Activated naive CD8-positive, alpha-beta T cell treated with anti-CD3 and anti-CD28 coated beads, Interleukin-2, amount 10 ng/mL, durations not matched to agents 7 days and 5 days (primary cell): ENCODE measurements at regions of chr1 and their contacts with region 1.

Region 1: GRCh38 chr1:234610348-234611152 is 572 bp upstream of the IRF2BP2 start:
- DNase-seq: peak; percentile 92
- ATAC-seq: peak; percentile 54
- H3K4me3 Mint-ChIP-seq: peak overlapping the region; percentile 93
- H3K27ac Mint-ChIP-seq: peak overlapping the region; percentile 96
- H3K4me1 Mint-ChIP-seq: peaks cover 42% of the 10 kb centered on the region
- H3K27me3 Mint-ChIP-seq: no peaks in the 10 kb centered on the region

Region 2: DNA sequence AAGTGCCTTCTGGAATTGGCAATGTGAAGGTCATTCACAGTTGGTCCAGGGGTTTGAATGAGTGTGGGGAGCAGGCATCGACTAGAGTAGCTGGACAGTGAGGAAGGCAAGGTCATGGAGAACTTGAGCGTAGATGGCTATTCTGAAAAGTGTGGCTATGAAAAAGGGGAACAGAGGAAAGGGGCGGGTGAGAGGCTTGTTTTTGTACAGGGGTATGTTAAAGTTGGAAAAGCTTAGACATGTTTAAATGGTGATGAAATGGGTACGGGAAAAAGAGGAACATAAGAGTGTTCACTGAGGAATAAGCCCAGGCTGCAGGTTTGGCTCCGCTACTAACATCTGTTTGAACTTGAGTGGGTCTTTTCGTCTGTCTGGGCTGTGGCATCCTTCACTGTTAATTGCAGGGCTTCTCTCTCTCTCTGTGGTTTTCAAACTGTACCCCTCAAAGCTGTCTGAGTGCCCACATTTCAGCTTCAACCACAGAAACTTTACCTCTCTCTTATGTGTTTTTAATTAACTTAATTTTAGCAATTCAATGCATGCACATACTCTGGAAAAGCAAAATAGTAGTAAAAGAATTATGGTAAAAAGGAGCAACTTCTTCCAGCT is 308.1 kb before region 1 on chr1:
- POLR2A ChIA-PET with region 1: no interaction called
- DNase-seq: no peak
- ATAC-seq: no peak
- H3K4me3 Mint-ChIP-seq: no peak overlapping the region
- H3K27ac Mint-ChIP-seq: no peak overlapping the region
- H3K4me1 Mint-ChIP-seq: peaks cover 6% of the 10 kb centered on the region
- H3K27me3 Mint-ChIP-seq: peaks cover 3% of the 10 kb centered on the region

Region 3: DNA sequence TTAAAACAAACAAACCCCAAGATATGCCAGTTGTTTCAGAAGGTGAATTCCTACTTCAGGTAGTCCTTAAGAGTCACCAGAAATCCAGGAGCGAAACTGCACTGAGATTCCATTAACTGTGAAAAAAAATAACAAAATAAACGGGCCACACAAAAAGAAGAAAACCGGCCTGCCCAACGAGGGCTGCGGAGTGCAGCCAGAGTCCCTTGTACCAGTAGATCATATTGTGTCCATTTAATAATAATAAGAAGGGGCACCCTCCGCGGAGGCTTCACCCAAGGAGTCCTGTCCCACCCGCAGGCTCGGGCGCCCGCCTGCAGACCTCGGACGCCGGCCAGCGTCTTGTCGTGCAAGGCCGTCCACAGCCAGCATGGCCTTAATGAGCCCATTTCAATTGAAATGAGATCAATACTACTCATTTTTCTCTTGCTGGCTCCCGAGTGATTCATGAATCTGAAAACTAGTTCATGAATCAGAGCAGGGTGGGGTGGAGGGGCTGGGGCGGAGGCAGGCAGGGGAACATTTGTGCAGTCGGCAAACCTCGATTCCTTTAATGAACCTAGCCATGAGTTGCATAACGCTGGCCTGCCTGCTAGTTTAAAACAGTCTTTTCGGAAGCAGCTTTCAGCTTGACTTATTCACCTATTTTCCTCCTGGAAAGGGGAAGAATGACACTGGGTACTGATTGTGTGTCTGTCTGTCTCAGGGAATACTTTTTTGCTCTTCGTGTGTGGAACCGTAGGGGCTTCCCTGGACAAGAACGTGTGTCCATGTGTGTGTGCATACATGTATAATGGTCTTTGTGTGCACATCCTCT is 112.6 kb after region 1 on chr1:
- POLR2A ChIA-PET with region 1: interaction called, 188 read pairs
- DNase-seq: no peak
- ATAC-seq: no peak
- H3K4me3 Mint-ChIP-seq: peak overlapping the region; percentile 76
- H3K27ac Mint-ChIP-seq: peak overlapping the region; percentile 94
- H3K4me1 Mint-ChIP-seq: peaks cover 54% of the 10 kb centered on the region
- H3K27me3 Mint-ChIP-seq: no peaks in the 10 kb centered on the region

Region 4: GRCh38 chr1:234743791-234744611 is 133.5 kb after region 1 on chr1:
- POLR2A ChIA-PET with region 1: no interaction called
- DNase-seq: no peak
- ATAC-seq: no peak
- H3K4me3 Mint-ChIP-seq: no peak overlapping the region
- H3K27ac Mint-ChIP-seq: no peak overlapping the region
- H3K4me1 Mint-ChIP-seq: no peaks in the 10 kb centered on the region
- H3K27me3 Mint-ChIP-seq: peaks cover 4% of the 10 kb centered on the region

Region 5: DNA sequence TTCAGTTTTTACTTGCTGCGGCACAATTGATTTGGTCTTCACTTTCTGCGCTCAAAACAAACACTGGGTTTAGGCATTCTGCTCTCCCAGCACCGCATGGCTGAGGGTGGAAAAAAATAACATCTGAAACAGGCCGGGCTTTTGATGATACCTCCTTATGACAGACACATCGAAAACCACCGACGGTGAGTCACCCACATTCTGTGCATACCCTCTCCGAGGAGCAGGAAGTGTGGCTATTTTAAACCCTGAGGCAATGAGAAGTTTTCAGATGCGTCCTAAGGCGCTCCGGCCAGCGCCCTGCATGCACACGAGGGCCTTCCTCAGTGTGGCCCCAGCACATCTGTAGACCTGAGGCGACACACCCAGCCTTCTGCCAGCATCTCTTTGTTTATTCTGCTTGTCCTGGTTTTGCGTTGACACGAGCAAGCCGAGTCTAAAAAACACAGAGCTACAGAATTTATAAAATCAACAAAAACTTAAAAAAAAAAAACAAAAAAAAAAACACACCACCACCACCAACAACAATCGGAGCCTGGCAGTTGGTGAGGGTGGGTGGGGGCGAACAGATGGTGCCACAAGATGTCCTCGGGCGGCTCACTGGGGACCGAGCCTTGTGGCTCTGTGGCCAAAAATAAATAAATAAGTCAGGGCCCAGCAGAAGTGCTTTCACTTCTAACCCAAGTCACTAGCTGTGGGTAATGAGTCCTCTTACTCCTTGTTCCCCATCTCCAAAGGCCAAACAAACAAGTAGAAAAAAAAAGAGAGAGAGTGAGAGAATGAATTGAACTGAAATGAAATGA is 162.0 kb after region 1 on chr1:
- POLR2A ChIA-PET with region 1: interaction called, 20 read pairs
- DNase-seq: peak; percentile 71
- ATAC-seq: peak; percentile 89
- H3K4me3 Mint-ChIP-seq: peak overlapping the region; percentile 72
- H3K27ac Mint-ChIP-seq: peak overlapping the region; percentile 92
- H3K4me1 Mint-ChIP-seq: peaks cover 49% of the 10 kb centered on the region
- H3K27me3 Mint-ChIP-seq: no peaks in the 10 kb centered on the region

Region 6: DNA sequence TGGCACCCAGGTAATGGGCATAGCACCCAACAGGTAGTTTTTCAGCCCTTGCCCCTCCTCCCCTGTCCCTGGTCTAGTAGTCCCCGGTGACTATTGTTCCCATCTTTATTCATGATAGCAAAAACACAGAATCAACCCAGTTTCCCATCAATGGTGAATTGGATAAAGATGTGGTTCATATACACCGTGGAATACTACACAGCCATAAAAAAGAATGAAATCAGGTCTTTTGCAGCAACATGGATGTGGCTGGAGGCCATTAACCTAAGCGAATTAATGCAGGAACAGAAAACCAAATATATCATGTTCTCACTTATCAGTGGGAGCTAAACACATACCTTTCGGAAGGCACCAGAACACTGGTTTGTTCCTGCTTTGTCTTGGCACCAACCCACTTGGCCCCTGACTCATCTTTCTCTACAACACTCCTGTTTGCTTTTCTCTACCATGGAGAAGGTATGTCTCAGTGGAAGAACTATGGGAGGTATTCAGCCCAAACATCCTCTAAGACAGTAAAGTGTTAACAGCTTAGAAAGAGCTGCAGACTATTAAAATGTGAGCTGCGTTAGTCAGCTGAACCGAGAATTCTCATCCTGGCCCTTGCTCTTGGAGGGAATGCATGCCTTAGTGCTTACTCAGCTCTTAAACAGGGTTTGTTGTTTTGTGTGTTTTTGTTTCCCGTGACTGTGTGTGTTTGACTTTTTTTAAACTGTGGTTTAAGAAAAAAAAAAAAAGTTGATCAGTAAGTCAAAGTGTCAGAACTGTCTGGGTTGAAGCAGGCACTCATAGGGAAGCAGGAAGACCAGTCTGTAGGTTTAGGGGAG is 315.1 kb after region 1 on chr1:
- POLR2A ChIA-PET with region 1: interaction called, 39 read pairs
- DNase-seq: no peak
- ATAC-seq: no peak
- H3K4me3 Mint-ChIP-seq: peak overlapping the region; percentile 68
- H3K27ac Mint-ChIP-seq: peak overlapping the region; percentile 95
- H3K4me1 Mint-ChIP-seq: peaks cover 47% of the 10 kb centered on the region
- H3K27me3 Mint-ChIP-seq: no peaks in the 10 kb centered on the region

Region 7: DNA sequence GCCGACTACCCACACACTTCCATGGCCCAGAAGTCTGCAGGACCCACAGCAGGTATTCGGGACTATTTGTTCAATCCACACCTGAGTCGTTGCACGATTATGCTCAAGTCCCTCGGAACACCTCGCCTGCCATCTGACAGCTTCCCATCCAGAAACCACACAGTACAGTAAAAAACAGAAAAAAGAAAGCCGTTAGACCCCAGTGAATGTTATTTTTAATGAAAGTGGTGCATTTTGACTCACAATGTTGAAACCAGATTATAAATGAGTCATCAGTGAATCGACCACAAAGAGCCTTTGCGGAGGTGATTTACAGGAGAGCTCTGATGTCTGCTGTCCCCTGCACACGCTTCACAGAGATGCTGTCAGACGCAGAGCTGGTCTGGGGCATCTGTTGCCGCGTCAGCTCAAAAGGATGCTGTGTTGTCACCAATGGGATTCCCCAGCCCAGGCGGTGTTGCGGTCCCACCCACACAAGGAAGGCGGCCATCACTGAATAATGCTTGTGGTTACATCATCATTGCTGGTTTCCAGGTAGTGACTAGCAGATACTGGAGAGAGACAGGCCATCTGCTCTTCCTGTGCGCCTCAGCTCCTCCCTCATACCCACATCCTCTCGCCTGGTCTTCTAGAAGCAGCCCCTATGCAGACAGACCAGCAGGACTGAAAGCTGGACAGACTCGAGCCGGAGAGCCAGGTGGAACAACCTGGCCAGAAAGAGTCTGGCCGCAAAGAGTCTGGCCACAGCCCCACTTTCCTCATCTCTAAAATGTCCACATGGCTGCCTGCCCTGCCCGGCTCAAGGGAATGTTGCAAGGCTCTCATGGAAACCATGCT is 401.3 kb after region 1 on chr1:
- POLR2A ChIA-PET with region 1: interaction called, 19 read pairs
- DNase-seq: peak; percentile 92
- ATAC-seq: peak; percentile 95
- H3K4me3 Mint-ChIP-seq: peak overlapping the region; percentile 64
- H3K27ac Mint-ChIP-seq: peak overlapping the region; percentile 93
- H3K4me1 Mint-ChIP-seq: peaks cover 69% of the 10 kb centered on the region
- H3K27me3 Mint-ChIP-seq: no peaks in the 10 kb centered on the region